ENCODE measurements at regions of chr2 and their contacts with region 1.

Region 1: GRCh38 chr2:211745295-211746097 is 793.1 kb downstream of the ERBB4 start:
- DNase-seq: peak; percentile 50
- CTCF ChIP-seq: peak; percentile 81

Region 2: DNA sequence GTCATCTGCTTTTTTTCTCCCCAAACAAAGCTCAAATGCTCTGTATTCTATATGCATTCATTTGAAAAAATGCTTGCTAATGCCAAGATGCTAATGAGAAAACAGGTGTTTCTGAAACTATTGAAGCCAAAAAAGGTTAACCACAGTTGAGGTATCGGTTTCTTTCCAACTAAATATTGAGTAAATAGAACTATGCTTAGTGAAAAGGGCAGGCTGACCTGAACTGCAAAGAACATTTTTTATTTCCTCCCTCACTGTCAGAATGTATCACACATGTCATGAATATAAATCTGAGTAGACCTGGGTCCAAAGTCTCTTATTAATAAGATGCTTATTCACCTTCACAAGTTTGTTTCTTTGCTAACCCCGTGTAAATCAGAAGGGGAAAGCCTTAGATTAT is 322.5 kb before region 1 on chr2:
- CTCF ChIA-PET with region 1: no interaction called
- POLR2A ChIA-PET with region 1: no interaction called
- DNase-seq: no peak
- CTCF ChIP-seq: no peak

Region 3: DNA sequence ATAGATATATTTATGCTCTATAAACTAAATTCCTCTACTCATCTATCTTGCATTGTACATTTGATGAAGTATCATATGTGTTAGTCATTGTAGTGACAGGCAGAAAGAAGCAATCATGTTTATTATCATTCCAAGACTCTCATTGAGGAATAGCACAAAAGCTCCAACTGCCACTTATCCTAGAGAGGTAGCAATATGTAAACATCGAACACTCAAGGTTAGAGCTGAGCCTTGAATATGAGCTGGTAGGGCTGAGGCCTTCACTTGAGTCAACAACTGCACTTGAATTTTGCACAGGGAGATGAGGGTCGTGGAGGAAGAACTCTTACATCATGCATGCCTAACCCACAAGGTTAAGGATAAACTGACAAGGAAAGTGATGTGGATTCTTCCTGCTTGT is 288.2 kb before region 1 on chr2:
- CTCF ChIA-PET with region 1: no interaction called
- POLR2A ChIA-PET with region 1: no interaction called
- DNase-seq: no peak
- CTCF ChIP-seq: no peak

Region 4: DNA sequence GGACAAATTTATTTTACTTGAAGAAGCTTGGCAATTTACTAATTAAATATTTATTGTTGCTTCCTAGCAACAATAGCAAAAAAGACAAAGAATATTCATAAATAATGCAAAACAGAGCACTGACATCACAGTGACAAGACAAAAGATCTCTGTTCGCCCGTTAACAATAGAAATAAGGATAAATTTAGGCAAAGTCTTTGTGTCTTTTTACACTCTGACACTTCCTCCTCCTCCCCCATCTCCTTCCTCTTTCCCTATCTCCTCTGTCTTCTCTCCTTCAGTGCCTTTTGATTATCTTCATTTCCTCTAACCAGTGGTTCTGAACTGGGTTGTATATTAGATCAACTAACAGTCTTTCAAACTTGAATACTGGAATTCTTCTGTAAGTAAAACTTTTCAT is 15.3 kb before region 1 on chr2:
- CTCF ChIA-PET with region 1: interaction called, 14 read pairs
- POLR2A ChIA-PET with region 1: no interaction called
- DNase-seq: no peak
- CTCF ChIP-seq: no peak

Region 5: DNA sequence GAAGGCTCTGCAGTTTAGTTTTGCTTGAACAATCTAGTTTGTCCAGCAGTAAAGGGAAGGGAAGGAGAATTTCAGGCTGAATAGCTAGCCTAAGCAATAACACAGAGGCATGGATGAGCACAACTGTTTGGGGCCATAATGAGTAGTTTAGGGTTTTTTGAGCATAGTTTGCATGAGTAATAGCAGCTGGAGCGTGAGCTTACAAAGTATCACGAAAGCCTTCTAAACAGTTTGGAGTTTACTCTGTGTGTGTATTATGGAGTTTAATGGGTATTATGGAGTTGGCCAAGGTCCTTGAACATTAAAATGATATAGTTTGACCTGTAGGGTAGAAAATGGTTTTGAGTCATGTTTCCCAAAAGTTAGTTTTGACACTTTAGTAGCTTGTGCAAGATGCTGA is 10.8 kb after region 1 on chr2:
- CTCF ChIA-PET with region 1: interaction called, 26 read pairs
- POLR2A ChIA-PET with region 1: no interaction called
- DNase-seq: no peak
- CTCF ChIP-seq: no peak

Region 6: GRCh38 chr2:211963969-211964368 is 218.5 kb after region 1 on chr2:
- CTCF ChIA-PET with region 1: no interaction called
- POLR2A ChIA-PET with region 1: no interaction called
- DNase-seq: no peak
- CTCF ChIP-seq: no peak